Endothelial cell of umbilical vein (primary cell): ENCODE measurements at regions of chr7 and their contacts with region 1.

Region 1: DNA sequence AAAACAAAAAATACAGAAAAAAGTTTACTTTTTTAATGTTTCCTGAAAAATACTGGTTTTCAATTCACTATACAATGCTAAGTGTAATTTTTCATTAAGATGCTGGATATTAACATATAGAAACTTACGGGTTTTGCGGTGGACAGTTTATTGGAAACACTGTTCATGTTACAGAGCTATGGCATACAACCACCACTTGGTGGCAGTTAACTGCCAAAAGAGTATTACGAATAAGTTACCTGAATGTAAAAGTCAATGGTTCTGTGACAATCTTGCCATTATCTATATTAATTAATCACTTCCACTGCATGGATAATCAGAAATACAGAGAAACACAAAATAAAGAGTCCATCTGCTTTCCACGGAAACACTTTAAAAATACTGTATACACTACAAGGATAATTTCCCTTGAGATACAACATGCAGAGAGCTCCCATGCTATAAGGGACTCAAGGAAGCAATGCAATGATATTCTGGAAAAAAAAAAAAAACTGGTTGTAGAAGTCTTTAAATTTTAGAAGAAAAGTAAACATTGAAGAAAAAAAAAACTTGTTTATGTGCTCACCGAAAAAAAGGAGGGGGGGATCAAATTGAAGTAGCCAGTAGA is 97.0 kb downstream of the TPK1 start:
- DNase-seq: peak; percentile 63
- H3K4me3 ChIP-seq: no peak overlapping the region
- H3K27ac ChIP-seq: no peak overlapping the region
- H3K4me1 ChIP-seq: no peaks in the 10 kb centered on the region
- H3K27me3 ChIP-seq: no peaks in the 10 kb centered on the region
- CTCF ChIP-seq: peak; percentile 40 to 61
- POLR2A ChIP-seq: no peak

Region 2: DNA sequence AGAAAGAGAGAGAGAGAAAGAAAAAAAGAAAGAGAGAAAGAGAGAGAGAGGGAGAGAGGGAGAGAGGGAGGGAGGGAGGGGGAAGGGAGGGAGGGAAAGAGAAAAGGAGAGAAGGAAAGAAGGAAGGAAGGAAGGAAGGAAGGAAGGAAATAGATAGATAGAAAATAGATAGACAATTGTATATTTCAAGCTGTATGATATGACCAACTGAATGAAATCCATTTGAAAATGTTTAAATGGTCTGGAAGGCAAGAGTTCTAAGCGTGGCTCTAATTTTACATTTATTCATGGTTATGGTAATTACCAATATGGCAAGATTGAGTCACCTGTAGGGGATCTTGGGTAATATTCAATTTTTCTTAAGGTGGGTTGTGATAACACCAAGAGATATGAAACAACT is 580.0 kb before region 1 on chr7:
- CTCF ChIA-PET with region 1: no interaction called
- POLR2A ChIA-PET with region 1: no interaction called
- dilution Hi-C with region 1: no loop called
- intact Hi-C with region 1: no loop called
- DNase-seq: no peak
- H3K4me3 ChIP-seq: no peak overlapping the region
- H3K27ac ChIP-seq: no peak overlapping the region
- H3K4me1 ChIP-seq: no peaks in the 10 kb centered on the region
- H3K27me3 ChIP-seq: peaks cover 0 to 2% of the 10 kb centered on the region in 2 experiments
- CTCF ChIP-seq: no peak
- POLR2A ChIP-seq: no peak

Region 3: GRCh38 chr7:144513334-144513733 is 225.5 kb before region 1 on chr7:
- CTCF ChIA-PET with region 1: interaction called, 3 read pairs
- POLR2A ChIA-PET with region 1: no interaction called
- dilution Hi-C with region 1: no loop called
- intact Hi-C with region 1: loop called (anchors 10 kb)
- DNase-seq: peak; percentile 65
- H3K4me3 ChIP-seq: no peak overlapping the region
- H3K27ac ChIP-seq: no peak overlapping the region
- H3K4me1 ChIP-seq: no peaks in the 10 kb centered on the region
- H3K27me3 ChIP-seq: no peaks in the 10 kb centered on the region
- CTCF ChIP-seq: peak in 1 of 2 donors; percentile 37
- POLR2A ChIP-seq: no peak

Region 4: GRCh38 chr7:144728551-144728950 is 10.3 kb before region 1 on chr7:
- CTCF ChIA-PET with region 1: interaction called, 31 read pairs
- POLR2A ChIA-PET with region 1: no interaction called
- dilution Hi-C with region 1: no loop called
- intact Hi-C with region 1: no loop called
- DNase-seq: no peak
- H3K4me3 ChIP-seq: no peak overlapping the region
- H3K27ac ChIP-seq: no peak overlapping the region
- H3K4me1 ChIP-seq: no peaks in the 10 kb centered on the region
- H3K27me3 ChIP-seq: no peaks in the 10 kb centered on the region
- CTCF ChIP-seq: no peak
- POLR2A ChIP-seq: no peak

Region 5: DNA sequence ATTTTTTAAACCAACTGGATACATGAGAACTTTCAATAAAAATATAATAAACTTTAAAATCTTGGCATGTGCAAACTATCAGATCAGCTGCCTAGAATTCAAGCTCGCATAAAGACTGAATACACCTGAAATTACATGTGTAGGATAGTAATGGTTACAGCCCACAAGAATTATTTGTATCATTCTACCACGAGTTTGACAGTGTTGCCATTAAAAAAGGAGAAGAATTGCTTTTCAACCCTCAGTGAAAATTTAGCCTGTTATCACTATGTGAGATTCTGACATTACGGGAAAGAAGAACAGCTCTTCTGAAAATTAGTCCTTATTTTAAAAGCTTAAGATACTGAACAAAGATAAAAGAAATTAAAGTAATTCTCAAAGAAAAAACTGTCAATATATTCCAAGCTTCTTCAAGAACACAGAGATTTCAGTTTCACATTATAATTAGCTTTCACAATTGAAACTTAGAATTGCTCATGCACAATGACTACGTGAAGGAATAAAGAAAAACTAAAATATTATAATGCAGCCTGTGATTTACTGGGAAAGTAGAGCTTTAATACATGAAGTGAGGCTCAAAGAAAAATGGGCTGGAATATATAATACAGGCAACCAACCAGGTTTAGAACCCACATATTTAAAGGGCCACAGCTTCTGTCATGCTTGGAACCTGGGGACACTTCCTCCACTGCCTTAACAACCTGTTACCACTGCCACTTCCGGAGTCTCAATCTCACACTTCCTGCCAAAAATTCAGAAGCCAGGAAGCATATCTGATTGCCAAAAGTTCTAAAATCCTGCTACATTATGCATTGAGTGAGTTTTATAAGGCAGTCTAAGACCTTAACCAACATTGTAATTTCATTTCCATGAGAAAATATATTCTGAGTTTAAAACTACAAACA is 73.8 kb after region 1 on chr7:
- CTCF ChIA-PET with region 1: interaction called, 12 read pairs
- POLR2A ChIA-PET with region 1: no interaction called
- dilution Hi-C with region 1: no loop called
- intact Hi-C with region 1: no loop called
- DNase-seq: no peak
- H3K4me3 ChIP-seq: no peak overlapping the region
- H3K27ac ChIP-seq: no peak overlapping the region
- H3K4me1 ChIP-seq: peaks cover 9% of the 10 kb centered on the region
- H3K27me3 ChIP-seq: no peaks in the 10 kb centered on the region
- CTCF ChIP-seq: no peak
- POLR2A ChIP-seq: no peak

Region 6: DNA sequence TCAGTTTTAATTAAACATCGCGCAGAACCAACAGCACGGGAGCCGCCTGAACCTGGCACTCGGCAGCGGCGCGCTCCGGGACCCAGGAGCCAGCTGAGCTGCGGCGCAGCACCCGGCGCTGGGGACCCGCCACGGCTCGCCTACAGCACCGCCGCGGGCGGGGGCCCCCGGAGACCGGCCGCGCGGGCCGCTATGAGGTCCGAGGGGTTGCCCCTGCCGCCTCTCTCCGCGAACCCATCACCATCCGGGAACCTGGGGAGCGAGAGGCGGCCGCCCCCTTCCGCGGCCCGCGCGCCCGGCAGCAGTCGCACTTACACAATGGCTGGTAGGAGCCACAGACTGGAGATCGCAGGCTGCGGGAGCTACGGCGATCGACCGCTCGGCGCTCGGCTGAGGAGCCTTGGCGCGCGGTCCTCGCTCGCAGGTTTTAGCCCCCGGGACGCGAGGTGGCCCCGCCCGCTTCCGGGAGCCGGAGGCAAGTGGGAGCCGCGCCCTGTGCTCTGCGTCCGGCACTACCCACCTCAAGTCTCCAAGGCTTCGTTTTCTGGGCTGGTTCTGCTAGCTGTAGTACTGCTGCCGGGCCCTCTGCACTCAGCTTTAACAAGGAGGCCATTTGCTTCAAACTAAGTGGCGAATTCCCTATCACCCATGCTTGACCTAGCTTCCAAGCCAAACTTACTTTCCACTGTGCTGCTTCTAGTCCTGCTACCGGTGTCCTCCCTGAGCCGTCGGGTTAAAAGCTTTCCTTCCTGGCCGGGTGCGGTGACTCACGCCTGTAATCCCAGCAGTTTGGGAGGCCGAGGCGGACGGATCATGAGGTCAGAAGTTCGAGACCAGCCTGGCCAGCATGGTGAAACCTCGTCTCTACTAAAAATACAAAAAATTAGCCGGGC is 97.1 kb after region 1 on chr7 and contains the start of gene TPK1:
- CTCF ChIA-PET with region 1: interaction called, 76 read pairs
- POLR2A ChIA-PET with region 1: no interaction called
- dilution Hi-C with region 1: no loop called
- intact Hi-C with region 1: loop called (anchors 1 kb)
- DNase-seq: peak; percentile 97
- H3K4me3 ChIP-seq: peak within 1 kb of the TSS; percentile 45 to 97 (median 96)
- H3K27ac ChIP-seq: peak within 1 kb of the TSS; percentile 96
- H3K4me1 ChIP-seq: peaks cover 5% of the 10 kb centered on the region
- H3K27me3 ChIP-seq: no peaks in the 10 kb centered on the region
- CTCF ChIP-seq: no peak
- POLR2A ChIP-seq: peak; percentile 82
- total RNA-seq, gene TPK1: 8.3 and 9.3 TPM in 2 replicates

Region 7: DNA sequence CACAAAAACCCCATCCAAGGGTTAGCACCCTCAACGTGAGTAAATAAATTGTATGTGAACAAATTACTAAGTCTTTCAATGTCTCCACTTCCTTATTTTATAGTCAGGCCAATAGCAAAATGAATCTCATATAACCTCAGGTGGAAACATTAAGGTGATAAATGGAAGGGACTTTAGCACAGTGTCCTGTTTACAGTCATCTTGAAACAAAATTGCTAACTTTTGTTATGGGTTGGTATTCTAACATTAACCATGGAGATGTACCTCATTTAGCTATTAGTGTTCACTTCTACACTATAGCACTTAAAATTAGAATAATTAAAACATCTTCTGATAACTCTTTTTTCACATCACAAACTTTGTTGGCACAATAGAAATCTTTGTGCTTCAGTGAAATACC is 1122.0 kb after region 1 on chr7:
- CTCF ChIA-PET with region 1: no interaction called
- POLR2A ChIA-PET with region 1: no interaction called
- dilution Hi-C with region 1: no loop called
- intact Hi-C with region 1: no loop called
- DNase-seq: no peak
- H3K4me3 ChIP-seq: no peak overlapping the region
- H3K27ac ChIP-seq: no peak overlapping the region
- H3K4me1 ChIP-seq: no peaks in the 10 kb centered on the region
- H3K27me3 ChIP-seq: no peaks in the 10 kb centered on the region
- CTCF ChIP-seq: no peak
- POLR2A ChIP-seq: no peak